Transverse colon (tissue), 4 donors: ENCODE measurements at regions of chr18 and their contacts with region 1.

Region 1: GRCh38 chr18:46700066-46700824 is 43.2 kb upstream of the LOXHD1 start:
- DNase-seq: no peak
- H3K4me3 ChIP-seq: no peak overlapping the region
- H3K27ac ChIP-seq: no peak overlapping the region
- H3K4me1 ChIP-seq: no peaks in the 10 kb centered on the region
- H3K27me3 ChIP-seq: no peaks in the 10 kb centered on the region
- CTCF ChIP-seq: no peak
- EP300 ChIP-seq: no peak
- POLR2A ChIP-seq: no peak

Region 2: DNA sequence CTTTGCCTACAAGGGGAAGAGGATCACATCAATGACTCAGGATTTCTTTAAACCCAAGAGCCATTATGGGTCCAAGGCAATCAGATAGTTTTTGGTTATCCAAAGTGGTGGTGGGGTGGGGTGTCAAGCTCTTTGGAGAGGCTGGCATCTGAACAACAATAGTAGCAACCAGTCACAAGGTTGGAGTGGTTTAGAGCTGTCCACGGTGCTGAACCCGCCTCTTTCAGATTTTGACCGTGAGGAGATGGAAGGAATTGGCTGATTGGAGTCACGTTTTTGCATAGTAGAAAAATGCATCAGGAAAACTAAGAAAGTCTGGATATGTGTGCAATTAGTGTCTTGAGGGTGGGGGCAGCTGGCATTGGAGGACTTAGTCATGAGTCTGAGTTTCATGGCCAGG is 203.1 kb before region 1 on chr18:
- in situ Hi-C with region 1: no loop called
- intact Hi-C with region 1: no loop called
- DNase-seq: no peak
- H3K4me3 ChIP-seq: no peak overlapping the region
- H3K27ac ChIP-seq: no peak overlapping the region
- H3K4me1 ChIP-seq: no peaks in the 10 kb centered on the region
- H3K27me3 ChIP-seq: peaks cover 5% of the 10 kb centered on the region
- CTCF ChIP-seq: no peak
- EP300 ChIP-seq: no peak
- POLR2A ChIP-seq: no peak

Region 3: GRCh38 chr18:46738491-46738890 is 38.2 kb after region 1 on chr18:
- in situ Hi-C with region 1: no loop called
- intact Hi-C with region 1: loop called (anchors 1 kb)
- DNase-seq: no peak
- H3K4me3 ChIP-seq: no peak overlapping the region
- H3K27ac ChIP-seq: no peak overlapping the region
- H3K4me1 ChIP-seq: no peaks in the 10 kb centered on the region
- H3K27me3 ChIP-seq: peaks cover 9% of the 10 kb centered on the region
- CTCF ChIP-seq: no peak
- EP300 ChIP-seq: no peak
- POLR2A ChIP-seq: no peak

Region 4: DNA sequence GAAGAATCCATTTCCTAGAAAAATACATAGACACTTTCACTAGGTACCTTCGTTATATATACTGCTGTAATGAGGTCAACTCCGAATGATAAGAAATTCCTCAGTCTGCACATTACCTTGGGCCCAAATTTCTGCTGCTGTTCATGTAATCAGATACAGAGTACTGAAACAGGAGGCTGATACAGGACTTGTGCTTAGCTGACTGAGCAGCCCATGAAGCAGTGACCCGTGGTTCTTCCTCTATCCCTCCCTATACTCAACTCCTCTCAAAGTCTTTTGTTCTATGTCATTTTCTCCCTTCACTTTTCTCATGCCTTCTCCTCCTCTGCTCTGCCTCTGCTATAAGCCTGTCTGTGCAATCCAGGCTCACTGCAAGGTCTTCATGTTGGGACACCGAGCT is 114.2 kb after region 1 on chr18:
- in situ Hi-C with region 1: no loop called
- intact Hi-C with region 1: no loop called
- DNase-seq: no peak
- H3K4me3 ChIP-seq: no peak overlapping the region
- H3K27ac ChIP-seq: no peak overlapping the region
- H3K4me1 ChIP-seq: no peaks in the 10 kb centered on the region
- H3K27me3 ChIP-seq: no peaks in the 10 kb centered on the region
- CTCF ChIP-seq: no peak
- EP300 ChIP-seq: no peak
- POLR2A ChIP-seq: no peak